Endothelial cell of umbilical vein (primary cell): ENCODE measurements at regions of chr11 and their contacts with region 1.

Region 1: GRCh38 chr11:2122222-2123085 is 16.7 kb downstream of the IGF2 start:
- DNase-seq: peak; percentile 35
- H3K4me3 ChIP-seq: no peak overlapping the region
- H3K27ac ChIP-seq: no peak overlapping the region
- H3K4me1 ChIP-seq: no peaks in the 10 kb centered on the region
- H3K27me3 ChIP-seq: peaks cover 0 to 7% of the 10 kb centered on the region in 2 experiments
- CTCF ChIP-seq: no peak
- POLR2A ChIP-seq: no peak

Region 2: DNA sequence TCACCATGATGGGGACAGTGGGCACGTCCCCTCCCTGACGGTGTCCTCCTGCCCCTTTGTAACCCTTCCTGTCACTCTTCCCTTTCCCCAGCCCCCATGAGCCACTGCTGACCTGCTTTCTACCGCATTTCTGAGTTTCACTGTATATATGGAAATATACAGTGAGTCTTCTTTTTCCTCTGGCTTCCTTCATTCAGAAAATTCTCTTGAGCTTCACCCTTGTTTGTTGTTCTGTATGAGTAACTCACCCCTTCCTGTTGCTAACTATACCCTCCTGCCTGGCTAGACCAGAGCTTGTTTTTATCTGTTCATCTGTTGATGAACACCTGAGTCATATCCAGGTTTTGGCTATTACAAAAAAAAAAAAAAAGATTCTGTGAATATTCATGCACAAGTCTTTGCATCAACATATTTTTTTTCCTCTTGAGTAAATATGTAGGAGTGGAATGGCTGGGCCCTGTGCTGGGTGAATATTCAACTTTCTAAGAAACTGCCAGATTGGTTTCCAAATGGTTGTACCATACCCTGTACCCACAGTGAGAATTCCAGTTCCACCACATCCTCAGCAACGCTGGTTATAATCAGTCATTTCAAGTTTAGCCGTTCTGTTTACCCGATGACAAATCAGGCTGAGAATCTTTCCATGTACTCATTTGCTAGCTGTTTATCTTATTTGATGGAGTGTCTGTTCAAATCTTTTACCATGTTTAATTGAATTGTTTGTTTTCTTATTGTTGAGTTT is 45.2 kb before region 1 on chr11:
- CTCF ChIA-PET with region 1: no interaction called
- POLR2A ChIA-PET with region 1: no interaction called
- dilution Hi-C with region 1: no loop called
- intact Hi-C with region 1: loop called (anchors 1 kb)
- DNase-seq: peak; percentile 86
- H3K4me3 ChIP-seq: no peak overlapping the region
- H3K27ac ChIP-seq: peak overlapping the region; percentile 80
- H3K4me1 ChIP-seq: peaks cover 17% of the 10 kb centered on the region
- H3K27me3 ChIP-seq: no peaks in the 10 kb centered on the region
- CTCF ChIP-seq: no peak
- POLR2A ChIP-seq: no peak

Region 3: GRCh38 chr11:2194877-2195755 is 72.7 kb after region 1 on chr11:
- CTCF ChIA-PET with region 1: no interaction called
- POLR2A ChIA-PET with region 1: no interaction called
- dilution Hi-C with region 1: no loop called
- intact Hi-C with region 1: no loop called
- DNase-seq: peak; percentile 12
- H3K4me3 ChIP-seq: no peak overlapping the region
- H3K27ac ChIP-seq: no peak overlapping the region
- H3K4me1 ChIP-seq: no peaks in the 10 kb centered on the region
- H3K27me3 ChIP-seq: peaks cover 0 to 6% of the 10 kb centered on the region in 2 experiments
- CTCF ChIP-seq: peak; percentile 87 to 96
- POLR2A ChIP-seq: no peak